RWPE1 (cell line): ENCODE measurements at regions of chr3 and their contacts with region 1.

Region 1: GRCh38 chr3:83233715-83234114 is 1472.3 kb upstream of the GBE1 start:
- DNase-seq: no peak
- H3K27ac ChIP-seq: no peak overlapping the region
- CTCF ChIP-seq: no peak

Region 2: DNA sequence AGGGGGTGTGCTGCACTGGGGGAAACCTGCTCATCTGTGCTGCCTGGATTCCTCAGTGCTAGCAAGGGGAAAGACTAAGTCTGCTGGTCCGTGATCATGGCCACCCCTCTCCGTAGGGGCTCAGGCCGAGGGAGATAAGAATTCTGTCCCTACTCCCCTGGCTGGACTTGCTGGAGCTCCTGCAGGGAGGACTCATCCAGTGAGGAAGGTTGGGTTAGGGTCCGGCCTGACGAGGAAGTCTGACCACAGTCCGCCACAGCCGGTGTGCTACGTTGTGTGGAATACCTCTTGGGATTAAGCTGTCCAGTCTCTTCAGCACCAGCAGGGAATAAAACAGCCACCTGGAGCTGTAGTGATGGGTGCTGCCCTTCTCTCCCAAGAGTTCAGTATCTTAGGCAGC is 416.0 kb after region 1 on chr3:
- CTCF ChIA-PET with region 1: interaction called, 11 read pairs
- POLR2A ChIA-PET with region 1: no interaction called
- DNase-seq: no peak
- H3K27ac ChIP-seq: no peak overlapping the region
- CTCF ChIP-seq: no peak